Transverse colon (tissue), 4 donors: ENCODE measurements at regions of chr6 and their contacts with region 1.

Region 1: DNA sequence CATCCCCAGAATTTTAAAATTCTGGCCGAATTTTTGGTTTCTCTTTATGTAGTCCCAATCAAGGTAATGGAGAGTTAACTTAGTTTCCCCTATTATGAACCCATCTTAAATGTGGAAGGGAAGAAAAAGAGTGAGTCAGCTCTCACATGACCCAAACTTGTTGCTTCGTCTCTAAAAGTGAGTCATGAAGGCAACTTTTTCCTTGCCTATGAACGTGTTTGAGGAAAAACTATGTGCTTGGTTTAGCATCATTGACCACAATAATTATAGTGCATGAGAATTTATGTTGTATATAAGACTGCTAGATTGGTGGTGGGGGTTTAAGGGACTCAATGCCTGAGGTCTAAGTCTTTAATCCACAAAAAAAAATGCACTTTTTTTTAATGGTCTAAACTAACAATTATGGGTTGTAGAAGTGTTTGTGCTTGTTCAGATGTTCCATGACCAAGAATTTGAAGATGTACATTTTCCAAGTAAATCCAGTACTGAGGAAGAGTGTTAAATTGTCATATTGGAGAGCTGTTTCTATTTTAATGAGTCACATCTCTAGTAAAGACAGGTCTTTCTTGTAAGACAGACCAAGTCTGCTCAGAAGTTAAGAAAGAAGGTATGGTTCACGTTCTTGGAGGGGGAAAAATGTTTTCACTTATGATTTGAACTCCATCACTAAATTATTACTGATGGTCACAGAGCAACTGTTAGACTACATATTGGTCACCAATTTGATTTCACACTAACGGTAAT is 409.9 kb upstream of the MARCKS start:
- DNase-seq: no peak
- H3K4me3 ChIP-seq: no peak overlapping the region
- H3K27ac ChIP-seq: no peak overlapping the region
- H3K4me1 ChIP-seq: no peaks in the 10 kb centered on the region
- H3K27me3 ChIP-seq: no peaks in the 10 kb centered on the region
- CTCF ChIP-seq: no peak
- EP300 ChIP-seq: no peak
- POLR2A ChIP-seq: no peak

Region 2: DNA sequence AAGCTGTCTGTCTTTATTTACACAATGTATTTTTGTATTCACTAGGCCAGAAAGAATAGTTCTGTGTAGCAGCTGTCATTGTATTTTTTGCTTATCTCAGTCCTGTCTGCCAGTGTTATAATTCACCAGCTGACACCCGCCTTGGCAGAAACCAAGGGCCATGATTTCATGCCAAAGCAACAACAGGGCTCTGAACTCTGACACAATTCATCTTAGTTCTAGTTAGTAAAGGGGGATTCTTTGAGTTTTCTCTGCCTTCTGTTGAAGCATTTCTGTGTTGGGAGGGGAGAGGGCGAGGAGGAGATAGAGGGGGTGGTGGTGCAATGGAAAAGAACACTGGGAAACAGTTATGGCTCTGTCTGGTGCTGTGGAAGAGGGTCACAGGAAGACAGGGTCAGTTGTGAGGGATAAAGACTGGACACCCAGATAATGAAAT is 274.7 kb before region 1 on chr6:
- in situ Hi-C with region 1: no loop called
- intact Hi-C with region 1: no loop called
- DNase-seq: peak; percentile 13
- H3K4me3 ChIP-seq: no peak overlapping the region
- H3K27ac ChIP-seq: no peak overlapping the region
- H3K4me1 ChIP-seq: peaks cover 0 to 8% (median 2%) of the 10 kb centered on the region in 4 donors
- H3K27me3 ChIP-seq: no peaks in the 10 kb centered on the region
- CTCF ChIP-seq: no peak
- EP300 ChIP-seq: no peak
- POLR2A ChIP-seq: no peak

Region 3: GRCh38 chr6:113317881-113318574 is 129.2 kb before region 1 on chr6:
- in situ Hi-C with region 1: no loop called
- intact Hi-C with region 1: loop called (anchors 10 kb)
- DNase-seq: no peak
- H3K4me3 ChIP-seq: no peak overlapping the region
- H3K27ac ChIP-seq: no peak overlapping the region
- H3K4me1 ChIP-seq: no peaks in the 10 kb centered on the region
- H3K27me3 ChIP-seq: no peaks in the 10 kb centered on the region
- CTCF ChIP-seq: no peak
- EP300 ChIP-seq: no peak
- POLR2A ChIP-seq: no peak